ENCODE measurements at regions of chr2 and their contacts with region 1.

Region 1: DNA sequence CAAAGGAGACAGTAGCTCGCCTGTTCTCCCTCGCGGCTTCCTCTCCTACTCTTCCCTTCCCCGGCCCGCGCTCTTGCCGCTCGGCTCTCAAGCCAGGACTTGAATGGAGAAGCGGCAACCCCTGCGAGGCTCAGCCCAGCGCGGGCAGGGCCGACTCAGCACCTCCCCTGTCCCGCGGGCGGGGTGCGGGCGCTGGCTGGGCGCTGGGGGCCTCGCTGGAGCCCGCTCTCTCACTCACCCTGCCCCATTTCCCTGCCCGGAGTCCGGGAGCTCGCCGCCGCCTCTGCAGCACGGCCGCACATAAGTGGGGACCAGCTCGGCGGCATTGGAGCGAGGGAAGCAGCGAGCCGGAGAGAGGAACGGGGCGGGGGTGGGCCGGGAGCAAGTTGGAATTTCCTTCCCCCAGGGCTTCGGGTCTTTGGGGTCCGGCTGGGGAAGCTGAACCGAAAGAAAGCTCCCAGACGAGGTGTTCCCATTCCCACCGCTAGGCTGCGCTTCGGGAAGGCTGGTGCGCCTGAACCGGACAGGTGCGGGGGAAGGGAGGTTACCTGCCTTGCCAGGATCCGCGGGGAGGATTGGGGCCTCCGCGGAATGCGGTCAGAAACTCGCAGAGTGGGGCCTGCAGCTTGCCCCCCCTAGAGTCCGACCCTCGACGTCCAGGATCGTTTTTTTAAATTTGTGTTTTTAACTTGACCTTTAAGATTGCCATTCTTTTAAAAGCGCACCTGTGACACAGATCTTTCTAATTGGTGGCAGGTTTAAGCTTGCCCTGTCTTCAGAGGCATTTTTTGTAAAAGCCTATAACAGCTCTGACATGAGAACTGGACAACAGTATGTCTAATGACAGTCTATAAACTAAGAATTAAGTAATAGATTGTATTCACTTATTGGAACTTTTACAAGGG is at the start of gene COBLL1:
- DNase-seq: peak; percentile 94 to 95
- H3K4me3 ChIP-seq: peak within 1 kb of the TSS; percentile 86
- H3K4me3 Mint-ChIP-seq: peak within 1 kb of the TSS; percentile 95
- H3K27ac Mint-ChIP-seq: peak within 1 kb of the TSS; percentile 92
- H3K4me1 ChIP-seq: peaks cover 27% of the 10 kb centered on the region
- H3K4me1 Mint-ChIP-seq: peaks cover 14% of the 10 kb centered on the region
- H3K27me3 ChIP-seq: no peaks in the 10 kb centered on the region
- H3K27me3 Mint-ChIP-seq: no peaks in the 10 kb centered on the region
- CTCF ChIP-seq: peak; percentile 87 to 89
- total RNA-seq, gene COBLL1: 42.1 and 47.9 TPM in 2 replicates

Region 2: DNA sequence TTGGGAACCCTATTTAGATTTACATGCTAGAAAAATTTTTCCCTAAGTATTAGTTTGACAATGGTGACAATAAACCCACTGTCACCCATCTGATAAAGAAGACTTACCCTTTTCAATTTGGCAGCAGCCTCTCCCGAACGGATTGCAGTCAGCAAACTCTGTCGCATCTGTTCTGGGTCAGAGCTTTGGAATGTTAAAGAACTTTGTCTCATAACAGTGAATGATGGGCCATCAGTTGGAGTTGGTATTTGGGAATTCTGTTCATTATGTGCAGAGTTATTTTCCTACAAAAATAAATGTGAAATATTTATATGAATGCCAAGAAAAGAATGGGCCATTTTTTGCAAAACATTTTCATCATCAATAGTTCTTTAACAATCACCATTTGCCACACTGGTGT is 149.9 kb before region 1 on chr2:
- CTCF ChIA-PET with region 1: no interaction called
- POLR2A ChIA-PET with region 1: no interaction called
- intact Hi-C with region 1: loop called (anchors 1 kb)
- DNase-seq: peak in 1 of 2 experiments; percentile 8
- H3K4me3 ChIP-seq: no peak overlapping the region
- H3K4me3 Mint-ChIP-seq: no peak overlapping the region
- H3K27ac Mint-ChIP-seq: no peak overlapping the region
- H3K4me1 ChIP-seq: peaks cover 31% of the 10 kb centered on the region
- H3K4me1 Mint-ChIP-seq: peaks cover 13% of the 10 kb centered on the region
- H3K27me3 ChIP-seq: no peaks in the 10 kb centered on the region
- H3K27me3 Mint-ChIP-seq: no peaks in the 10 kb centered on the region
- CTCF ChIP-seq: no peak

Region 3: DNA sequence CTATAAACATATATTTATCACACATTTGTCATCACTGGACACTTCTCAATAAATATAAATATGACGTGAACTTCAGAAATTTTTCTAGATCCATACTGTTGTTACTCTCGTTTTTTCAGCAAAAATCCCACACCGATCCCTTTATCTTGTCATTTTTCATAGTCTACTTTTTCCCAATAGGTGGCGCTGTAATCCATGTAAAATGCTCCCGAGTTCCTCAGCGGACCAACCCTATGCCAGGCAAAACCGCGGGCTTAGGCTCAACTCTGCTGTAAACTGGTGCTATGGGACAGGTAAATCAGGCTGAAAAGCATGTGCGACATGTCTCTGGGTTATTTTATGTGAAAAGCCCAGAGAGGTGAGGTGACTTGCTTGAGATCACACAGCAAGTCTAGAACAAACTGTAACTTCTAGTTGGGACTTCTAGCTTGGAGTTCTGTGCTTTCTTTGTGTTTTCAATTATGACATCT is 104.3 kb before region 1 on chr2:
- CTCF ChIA-PET with region 1: interaction called, 11 read pairs
- POLR2A ChIA-PET with region 1: no interaction called
- intact Hi-C with region 1: loop called (anchors 1 kb)
- DNase-seq: peak; percentile 75 to 80
- H3K4me3 ChIP-seq: no peak overlapping the region
- H3K4me3 Mint-ChIP-seq: no peak overlapping the region
- H3K27ac Mint-ChIP-seq: no peak overlapping the region
- H3K4me1 ChIP-seq: peaks cover 25% of the 10 kb centered on the region
- H3K4me1 Mint-ChIP-seq: peaks cover 19% of the 10 kb centered on the region
- H3K27me3 ChIP-seq: no peaks in the 10 kb centered on the region
- H3K27me3 Mint-ChIP-seq: no peaks in the 10 kb centered on the region
- CTCF ChIP-seq: peak; percentile 65 to 67

Region 4: DNA sequence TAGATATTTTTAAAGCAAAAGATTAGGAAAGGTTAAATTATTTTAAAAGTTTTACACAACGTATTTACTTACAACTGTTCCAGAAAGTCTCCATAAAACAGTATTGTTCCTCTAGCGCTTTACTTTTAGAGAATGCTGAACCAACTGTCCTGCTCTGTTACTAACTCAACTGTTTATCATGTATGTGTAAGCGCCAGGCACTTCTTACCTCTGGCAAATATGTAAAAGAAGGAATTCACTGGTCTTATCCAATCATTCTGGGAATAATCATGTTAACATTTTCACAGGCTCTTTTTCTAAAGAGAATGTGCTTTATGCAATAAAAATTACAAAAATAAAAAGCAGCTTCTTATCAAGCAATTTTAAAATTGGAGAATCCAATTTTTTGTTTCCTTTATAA is 68.3 kb before region 1 on chr2:
- CTCF ChIA-PET with region 1: interaction called, 8 read pairs
- POLR2A ChIA-PET with region 1: no interaction called
- intact Hi-C with region 1: loop called (anchors 2 kb)
- DNase-seq: no peak
- H3K4me3 ChIP-seq: no peak overlapping the region
- H3K4me3 Mint-ChIP-seq: no peak overlapping the region
- H3K27ac Mint-ChIP-seq: no peak overlapping the region
- H3K4me1 ChIP-seq: peaks cover 21% of the 10 kb centered on the region
- H3K4me1 Mint-ChIP-seq: peaks cover 36% of the 10 kb centered on the region
- H3K27me3 ChIP-seq: no peaks in the 10 kb centered on the region
- H3K27me3 Mint-ChIP-seq: no peaks in the 10 kb centered on the region
- CTCF ChIP-seq: no peak

Region 5: DNA sequence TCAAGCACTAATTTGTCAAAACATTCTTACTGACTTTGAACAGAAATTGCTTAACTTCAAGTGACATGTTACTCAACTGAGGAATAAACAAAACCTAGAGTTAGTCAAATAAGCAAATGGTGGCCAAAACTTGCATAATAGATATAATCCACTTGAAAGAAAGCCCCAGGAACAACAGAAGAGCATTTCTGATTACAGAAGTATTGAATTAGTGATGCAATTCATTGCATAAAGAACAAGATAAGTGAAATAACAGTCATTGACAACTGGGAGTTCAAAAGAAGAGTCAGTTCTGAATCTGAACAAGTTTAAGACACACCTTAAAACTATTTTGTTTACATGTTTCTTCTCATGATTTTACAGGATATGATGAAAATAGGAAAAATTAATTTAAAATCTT is 31.1 kb before region 1 on chr2:
- CTCF ChIA-PET with region 1: interaction called, 3 read pairs
- POLR2A ChIA-PET with region 1: no interaction called
- intact Hi-C with region 1: loop called (anchors 2 kb)
- DNase-seq: peak in 1 of 2 experiments; percentile 14
- H3K4me3 ChIP-seq: no peak overlapping the region
- H3K4me3 Mint-ChIP-seq: no peak overlapping the region
- H3K27ac Mint-ChIP-seq: no peak overlapping the region
- H3K4me1 ChIP-seq: peaks cover 15% of the 10 kb centered on the region
- H3K4me1 Mint-ChIP-seq: no peaks in the 10 kb centered on the region
- H3K27me3 ChIP-seq: no peaks in the 10 kb centered on the region
- H3K27me3 Mint-ChIP-seq: no peaks in the 10 kb centered on the region
- CTCF ChIP-seq: no peak

Region 6: DNA sequence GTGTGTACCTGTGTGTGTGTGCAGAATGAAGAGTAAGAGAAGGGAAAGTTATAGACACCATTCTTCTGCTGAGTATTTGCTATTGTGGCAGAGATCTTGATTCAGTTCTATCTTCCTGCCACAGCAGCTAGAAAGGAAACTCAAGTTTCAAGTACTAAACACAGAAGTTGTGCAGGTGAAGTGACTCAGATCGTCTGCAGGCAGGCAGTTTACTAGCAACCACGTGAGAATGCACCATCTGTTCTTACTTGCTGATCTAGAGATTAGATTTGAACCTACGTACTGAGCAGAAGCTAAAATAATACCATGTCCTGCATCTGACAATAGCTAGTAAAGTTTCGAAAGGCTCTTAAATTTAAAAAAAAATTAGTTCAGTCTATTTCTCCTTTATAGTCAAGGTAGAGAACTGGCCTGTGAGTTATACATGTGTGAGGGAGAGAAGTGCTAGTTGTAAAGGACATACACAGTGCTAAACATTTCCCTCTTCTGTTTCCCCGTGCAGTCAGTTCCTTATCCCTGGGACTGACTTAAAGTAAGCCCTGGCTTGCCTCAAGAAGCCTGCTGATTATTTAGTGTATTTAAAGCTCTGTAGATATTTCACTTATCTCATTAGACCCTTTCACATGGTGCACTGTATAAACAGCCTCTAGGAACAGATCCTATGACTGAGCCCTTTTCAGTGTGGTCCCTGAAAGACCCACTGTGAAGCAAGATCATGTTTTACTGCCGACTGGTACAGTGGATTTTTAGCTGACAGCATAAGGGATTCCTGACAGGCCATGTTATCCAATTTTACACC is 68.3 kb after region 1 on chr2:
- CTCF ChIA-PET with region 1: interaction called, 20 read pairs
- POLR2A ChIA-PET with region 1: interaction called, 14 read pairs
- intact Hi-C with region 1: loop called (anchors 1 kb)
- DNase-seq: peak; percentile 39 to 60
- H3K4me3 ChIP-seq: no peak overlapping the region
- H3K4me3 Mint-ChIP-seq: peak overlapping the region; percentile 4
- H3K27ac Mint-ChIP-seq: peak overlapping the region; percentile 60
- H3K4me1 ChIP-seq: peaks cover 67% of the 10 kb centered on the region
- H3K4me1 Mint-ChIP-seq: peaks cover 29% of the 10 kb centered on the region
- H3K27me3 ChIP-seq: no peaks in the 10 kb centered on the region
- H3K27me3 Mint-ChIP-seq: no peaks in the 10 kb centered on the region
- CTCF ChIP-seq: no peak

Measured in Caco-2 (cell line).